GM13976 (cell line): ENCODE measurements at regions of chr20 and their contacts with region 1.

Region 1: GRCh38 chr20:47620808-47621805 is 119.4 kb downstream of the NCOA3 start:
- DNase-seq: peak; percentile 44
- CTCF ChIP-seq: peak; percentile 44

Region 2: GRCh38 chr20:47196091-47197081 is 424.7 kb before region 1 on chr20:
- in situ Hi-C with region 1: loop called (anchors 10 kb)
- DNase-seq: peak; percentile 86
- CTCF ChIP-seq: peak; percentile 93

Region 3: DNA sequence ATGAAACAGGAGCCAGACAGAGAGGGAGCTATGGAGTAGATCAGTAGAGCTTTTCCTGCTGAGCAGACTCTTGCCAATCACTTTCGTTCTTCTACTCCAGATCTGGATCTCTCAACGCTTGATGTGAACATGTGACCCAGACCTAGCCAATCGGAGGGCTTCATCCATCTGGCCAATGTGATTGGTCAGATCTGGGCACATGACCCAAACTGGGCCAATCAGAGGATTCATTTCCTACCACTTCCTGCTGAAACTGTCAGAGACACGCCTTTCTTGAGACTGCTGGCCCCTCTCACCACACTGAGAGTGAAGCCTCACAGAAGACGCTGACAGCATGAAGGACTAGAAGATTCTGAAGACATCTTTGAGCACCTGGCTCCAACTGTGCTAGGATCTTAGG is 220.4 kb before region 1 on chr20:
- in situ Hi-C with region 1: loop called (anchors 25 kb)
- DNase-seq: no peak
- CTCF ChIP-seq: no peak

Region 4: GRCh38 chr20:47772995-47773716 is 152.0 kb after region 1 on chr20:
- in situ Hi-C with region 1: no loop called
- DNase-seq: no peak
- CTCF ChIP-seq: no peak